Common myeloid progenitor, CD34-positive (primary cell): ENCODE measurements at regions of chr12 and their contacts with region 1.

Region 1: GRCh38 chr12:122097927-122098756 is 19.6 kb downstream of the MLXIP start:
- DNase-seq: peak; percentile 61 to 89 (median 76)
- H3K4me3 ChIP-seq: peak overlapping the region in 2 of 7 experiments; percentile 14 to 44
- H3K27ac ChIP-seq: peak overlapping the region; percentile 20 to 75
- H3K4me1 ChIP-seq: peaks cover 8 to 67% (median 48%) of the 10 kb centered on the region in 4 experiments
- H3K27me3 ChIP-seq: no peaks in the 10 kb centered on the region

Region 2: GRCh38 chr12:121903202-121903601 is 194.9 kb before region 1 on chr12:
- CTCF ChIA-PET with region 1: no interaction called
- POLR2A ChIA-PET with region 1: no interaction called
- DNase-seq: peak in 1 of 3 donors; percentile 14
- H3K4me3 ChIP-seq: no peak overlapping the region
- H3K27ac ChIP-seq: no peak overlapping the region
- H3K4me1 ChIP-seq: no peaks in the 10 kb centered on the region
- H3K27me3 ChIP-seq: no peaks in the 10 kb centered on the region

Region 3: DNA sequence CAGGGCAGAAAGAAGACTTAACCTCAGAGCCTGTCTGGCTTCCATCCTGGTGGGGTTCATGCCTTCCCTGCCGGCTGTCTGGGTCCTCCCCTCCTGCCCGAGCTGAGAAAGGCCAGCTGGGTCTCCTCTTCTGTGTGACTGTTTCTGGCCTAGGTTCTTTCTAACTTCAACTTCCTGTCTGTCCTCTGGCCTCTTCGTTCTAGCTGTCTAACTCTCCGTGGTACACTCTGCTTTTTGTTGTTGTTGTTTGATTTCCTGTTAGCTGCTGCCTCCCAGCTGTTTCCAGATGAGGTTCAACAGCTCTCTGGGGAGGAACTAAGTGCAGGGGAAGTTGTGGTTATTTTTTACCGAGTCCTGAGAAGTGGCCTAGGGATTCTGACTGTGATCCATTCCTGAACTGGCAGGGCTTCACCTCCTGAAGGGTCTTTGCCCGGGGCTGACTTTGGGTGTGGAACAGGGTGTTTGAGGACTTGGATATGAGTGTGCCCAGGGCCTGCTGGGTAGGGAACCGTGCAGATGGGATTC is 16.4 kb before region 1 on chr12:
- CTCF ChIA-PET with region 1: interaction called, 63 read pairs
- POLR2A ChIA-PET with region 1: interaction called, 3 read pairs
- DNase-seq: peak; percentile 75 to 94 (median 90)
- H3K4me3 ChIP-seq: peak overlapping the region in 6 of 7 experiments; percentile 93 to 99 (median 96)
- H3K27ac ChIP-seq: peak overlapping the region; percentile 46 to 88
- H3K4me1 ChIP-seq: peaks cover 26 to 82% (median 62%) of the 10 kb centered on the region in 4 experiments
- H3K27me3 ChIP-seq: no peaks in the 10 kb centered on the region

Region 4: GRCh38 chr12:122087431-122088178 is 10.5 kb before region 1 on chr12:
- CTCF ChIA-PET with region 1: interaction called, 63 read pairs
- POLR2A ChIA-PET with region 1: interaction called, 4 read pairs
- DNase-seq: no peak
- H3K4me3 ChIP-seq: no peak overlapping the region
- H3K27ac ChIP-seq: peak overlapping the region in 1 of 2 experiments; percentile 60
- H3K4me1 ChIP-seq: peaks cover 7 to 83% (median 54%) of the 10 kb centered on the region in 4 experiments
- H3K27me3 ChIP-seq: no peaks in the 10 kb centered on the region

Region 5: GRCh38 chr12:122116707-122117535 is 18.8 kb after region 1 on chr12:
- CTCF ChIA-PET with region 1: interaction called, 27 read pairs
- POLR2A ChIA-PET with region 1: interaction called, 3 read pairs
- DNase-seq: no peak
- H3K4me3 ChIP-seq: no peak overlapping the region
- H3K27ac ChIP-seq: no peak overlapping the region
- H3K4me1 ChIP-seq: peaks cover 0 to 7% (median 6%) of the 10 kb centered on the region in 4 experiments
- H3K27me3 ChIP-seq: no peaks in the 10 kb centered on the region

Region 6: GRCh38 chr12:122159882-122160281 is 61.7 kb after region 1 on chr12:
- CTCF ChIA-PET with region 1: no interaction called
- POLR2A ChIA-PET with region 1: no interaction called
- DNase-seq: peak in 1 of 3 donors; percentile 21
- H3K4me3 ChIP-seq: no peak overlapping the region
- H3K27ac ChIP-seq: no peak overlapping the region
- H3K4me1 ChIP-seq: no peaks in the 10 kb centered on the region
- H3K27me3 ChIP-seq: peaks cover 0 to 1% (median 0%) of the 10 kb centered on the region in 5 experiments